K562 (cell line): ENCODE measurements at regions of chr1 and their contacts with region 1.

Region 1: GRCh38 chr1:219120624-219121544 is 52.8 kb upstream of the LYPLAL1 start:
- DNase-seq: peak; percentile 65 to 87 (median 72)
- ATAC-seq: peak; percentile 92
- H3K4me3 ChIP-seq: no peak overlapping the region
- H3K27ac ChIP-seq: peak overlapping the region; percentile 88
- H3K4me1 ChIP-seq: peaks cover 0 to 24% of the 10 kb centered on the region in 2 experiments; a peak in 2 of 5 replicates
- H3K27me3 ChIP-seq: no peaks in the 10 kb centered on the region
- CTCF ChIP-seq: no peak
- EP300 ChIP-seq: peak; percentile 95
- POLR2A ChIP-seq: no peak
- RAD21 ChIP-seq: no peak

Region 2: GRCh38 chr1:218996362-218996761 is 124.5 kb before region 1 on chr1:
- CTCF ChIA-PET with region 1: no interaction called
- POLR2A ChIA-PET with region 1: no interaction called
- in situ Hi-C with region 1: no loop called
- intact Hi-C with region 1: no loop called
- DNase-seq: no peak
- ATAC-seq: peak; percentile 69
- H3K4me3 ChIP-seq: no peak overlapping the region
- H3K27ac ChIP-seq: no peak overlapping the region
- H3K4me1 ChIP-seq: no peaks in the 10 kb centered on the region
- H3K27me3 ChIP-seq: no peaks in the 10 kb centered on the region
- CTCF ChIP-seq: peak in 1 of 3 experiments; percentile 10; a peak in 1 of 6 replicates
- EP300 ChIP-seq: no peak
- POLR2A ChIP-seq: no peak
- RAD21 ChIP-seq: no peak

Region 3: GRCh38 chr1:219088778-219089557 is 31.9 kb before region 1 on chr1:
- CTCF ChIA-PET with region 1: no interaction called
- POLR2A ChIA-PET with region 1: interaction called, 7 read pairs
- in situ Hi-C with region 1: no loop called
- intact Hi-C with region 1: loop called (anchors 1 kb)
- DNase-seq: peak; percentile 69 to 92 (median 80)
- ATAC-seq: peak; percentile 99
- H3K4me3 ChIP-seq: no peak overlapping the region
- H3K27ac ChIP-seq: peak overlapping the region; percentile 93
- H3K4me1 ChIP-seq: peaks cover 4 to 33% of the 10 kb centered on the region in 2 experiments; a peak in 4 of 5 replicates
- H3K27me3 ChIP-seq: no peaks in the 10 kb centered on the region
- CTCF ChIP-seq: no peak
- EP300 ChIP-seq: peak; percentile 92
- POLR2A ChIP-seq: peak; percentile 58
- RAD21 ChIP-seq: peak in 1 of 2 experiments; percentile 50; a peak in 2 of 4 replicates

Region 4: DNA sequence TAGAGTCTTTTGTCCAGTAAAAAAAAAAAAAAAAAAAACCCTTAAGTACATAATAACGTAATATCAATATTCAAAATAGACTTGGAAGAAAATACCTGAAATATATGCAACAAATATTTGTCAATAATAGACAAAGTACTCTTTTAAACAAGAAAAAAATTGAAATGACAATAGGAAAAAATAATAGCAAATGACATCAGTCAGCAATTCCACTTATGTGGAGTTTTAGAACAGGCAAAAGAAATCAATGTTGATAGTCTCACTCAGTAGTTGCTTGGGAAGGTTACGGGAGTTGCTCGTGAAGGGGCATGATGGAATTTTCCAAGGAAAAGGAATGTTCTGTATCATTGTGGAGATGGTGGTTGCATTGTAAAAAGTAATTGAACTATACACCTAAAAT is 69.7 kb after region 1 on chr1:
- CTCF ChIA-PET with region 1: no interaction called
- POLR2A ChIA-PET with region 1: no interaction called
- in situ Hi-C with region 1: no loop called
- intact Hi-C with region 1: no loop called
- DNase-seq: no peak
- ATAC-seq: no peak
- H3K4me3 ChIP-seq: no peak overlapping the region
- H3K27ac ChIP-seq: no peak overlapping the region
- H3K4me1 ChIP-seq: peaks cover 0 to 10% of the 10 kb centered on the region in 2 experiments; a peak in 2 of 5 replicates
- H3K27me3 ChIP-seq: no peaks in the 10 kb centered on the region
- CTCF ChIP-seq: no peak
- EP300 ChIP-seq: no peak
- POLR2A ChIP-seq: no peak
- RAD21 ChIP-seq: no peak